Right ventricle myocardium inferior (tissue), 1 donor: ENCODE measurements at regions of chr4 and their contacts with region 1.

Region 1: DNA sequence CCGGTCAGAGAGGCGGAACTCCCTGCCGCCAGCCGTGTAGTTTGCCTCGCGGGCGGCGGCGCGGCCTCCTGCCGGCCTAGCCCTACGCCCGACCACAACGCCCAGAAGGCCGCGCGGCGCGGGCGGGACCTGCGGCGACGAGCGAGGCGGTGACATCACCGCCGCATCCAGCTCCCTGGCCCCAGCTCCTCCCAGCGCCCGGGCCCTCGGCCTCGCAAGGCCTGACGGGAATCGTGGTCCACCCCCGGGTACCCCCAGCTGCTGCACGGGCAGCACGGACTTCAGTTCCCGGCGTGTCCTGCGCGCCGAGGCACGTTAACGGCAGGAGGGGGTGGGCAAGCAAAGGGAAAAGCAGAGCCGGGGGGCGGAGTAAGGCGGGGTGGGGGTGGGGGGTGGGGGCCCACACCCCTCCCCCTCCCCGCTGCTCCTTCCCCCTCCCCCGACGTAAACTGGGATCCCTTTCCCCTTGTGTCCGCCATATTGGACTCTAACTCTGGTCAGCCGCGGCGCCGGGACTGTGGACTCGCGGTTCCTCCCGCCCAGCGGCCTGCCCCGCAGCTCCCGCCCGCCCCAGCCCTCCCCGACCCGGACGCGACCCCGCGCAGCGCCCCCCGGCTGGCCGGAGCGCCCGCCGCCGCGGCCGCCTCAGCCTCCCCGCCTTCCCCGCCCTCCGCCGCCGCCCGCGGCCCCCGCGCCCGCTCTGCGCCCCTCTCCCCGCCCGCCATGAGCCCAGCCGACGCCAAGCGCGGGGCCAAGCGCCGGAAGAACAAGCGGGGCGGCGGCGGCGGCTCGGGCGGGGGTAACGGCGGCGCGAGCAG is at the start of gene FAM193A:
- DNase-seq: peak; percentile 100
- ATAC-seq: peak; percentile 99
- total RNA-seq, gene FAM193A: 14.9 TPM

Region 2: DNA sequence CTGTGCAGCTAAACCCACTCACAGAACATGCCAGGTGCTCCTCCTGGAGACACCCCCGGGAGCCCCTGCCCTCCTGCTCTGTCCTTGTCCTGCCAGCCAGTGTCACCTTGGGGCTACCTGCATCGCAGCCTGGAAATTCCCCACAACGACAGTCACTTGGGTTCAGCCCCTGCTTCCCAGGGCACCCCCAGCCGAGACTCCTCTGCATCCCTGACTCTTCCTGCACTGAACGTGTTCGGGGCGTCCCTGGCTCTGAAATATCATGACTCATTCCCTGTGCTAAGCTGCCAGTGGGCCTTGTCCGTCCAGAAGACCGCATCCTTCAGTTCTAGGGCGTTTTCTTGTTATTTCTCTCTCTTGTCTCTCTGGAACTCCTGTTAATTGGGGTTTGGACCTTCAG is 111.8 kb before region 1 on chr4:
- intact Hi-C with region 1: loop called (anchors 5 kb)
- DNase-seq: no peak
- ATAC-seq: no peak

Region 3: DNA sequence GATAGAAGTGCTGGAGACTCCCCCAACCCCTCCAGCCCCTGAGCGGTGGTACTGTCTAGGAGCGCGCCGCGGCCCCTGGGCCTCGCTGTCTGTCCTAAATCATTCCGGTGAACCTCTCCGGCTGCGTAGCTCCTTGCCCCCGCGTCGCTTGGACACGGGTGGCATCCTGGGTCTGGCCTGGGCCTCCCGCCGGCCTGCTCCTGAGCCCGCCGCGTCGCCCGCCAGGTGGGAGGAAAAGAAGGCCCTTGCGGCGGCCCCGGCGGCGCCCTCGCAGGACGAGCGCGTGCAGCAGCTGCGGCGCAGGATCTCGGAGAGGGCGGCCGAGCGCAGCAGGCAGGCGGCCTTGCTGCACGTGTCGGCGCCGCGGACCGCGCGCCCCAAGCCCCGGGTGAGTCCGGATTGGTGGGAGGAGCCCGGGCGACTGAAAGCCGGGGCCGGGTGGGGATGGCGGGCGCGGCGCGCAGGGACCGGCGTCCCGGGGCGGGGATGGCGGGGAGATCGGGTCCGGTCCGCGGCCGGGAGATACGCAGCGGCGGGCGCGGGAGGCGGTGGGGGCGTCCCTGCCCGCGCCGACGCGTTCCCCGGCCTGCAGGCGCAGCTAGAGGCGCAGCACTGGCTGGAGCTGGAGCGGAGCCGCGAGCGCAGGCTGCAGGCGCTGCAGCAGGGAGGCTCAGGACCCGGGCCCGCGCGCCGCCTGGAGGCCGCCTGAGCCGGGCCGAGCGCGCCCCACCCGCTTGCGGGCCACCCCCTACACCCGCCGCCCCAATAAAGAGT is 74.0 kb before region 1 on chr4:
- intact Hi-C with region 1: loop called (anchors 2 kb)
- DNase-seq: peak; percentile 86
- ATAC-seq: peak; percentile 92

Region 4: DNA sequence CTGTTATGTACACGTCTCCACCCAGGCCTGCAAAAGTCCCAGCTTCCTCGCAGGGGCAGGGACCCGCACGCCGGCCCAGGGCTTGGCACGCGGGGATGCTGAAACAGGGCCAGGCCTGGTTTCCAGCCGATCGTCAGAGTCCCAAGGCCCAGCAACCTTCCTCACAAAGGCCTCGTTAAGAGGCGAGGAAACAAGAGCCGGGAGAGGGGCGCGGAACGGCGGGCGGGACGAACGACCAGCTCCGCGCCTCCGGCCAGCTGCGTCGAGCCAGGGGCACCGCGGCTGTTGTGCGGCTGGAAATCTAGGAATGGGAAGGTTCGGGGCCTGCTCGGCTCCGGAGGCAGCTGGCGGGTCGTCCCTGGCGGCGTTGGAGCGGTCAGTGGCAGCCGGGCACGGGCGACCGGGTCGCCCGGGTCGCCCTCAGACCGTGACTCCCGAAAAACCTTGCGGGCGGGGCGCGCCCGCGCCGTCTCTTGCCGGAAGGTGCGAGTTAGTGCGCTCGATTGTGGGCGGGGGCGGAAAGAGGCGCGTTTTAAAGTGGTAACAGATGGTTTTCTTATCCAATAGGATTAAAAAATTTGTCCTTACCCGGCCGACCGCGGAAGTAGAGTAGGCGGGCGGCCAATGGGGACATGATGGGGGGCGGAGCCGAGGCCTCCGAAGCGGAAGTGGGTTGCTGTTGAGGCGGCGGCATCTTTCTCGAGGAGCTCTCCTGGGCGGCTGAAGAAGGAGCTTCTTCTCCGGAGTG is 67.8 kb before region 1 on chr4 and contains the start of gene RNF4:
- intact Hi-C with region 1: loop called (anchors 2 kb)
- DNase-seq: peak; percentile 98
- ATAC-seq: peak; percentile 96
- total RNA-seq, gene RNF4: 27.2 TPM

Region 5: DNA sequence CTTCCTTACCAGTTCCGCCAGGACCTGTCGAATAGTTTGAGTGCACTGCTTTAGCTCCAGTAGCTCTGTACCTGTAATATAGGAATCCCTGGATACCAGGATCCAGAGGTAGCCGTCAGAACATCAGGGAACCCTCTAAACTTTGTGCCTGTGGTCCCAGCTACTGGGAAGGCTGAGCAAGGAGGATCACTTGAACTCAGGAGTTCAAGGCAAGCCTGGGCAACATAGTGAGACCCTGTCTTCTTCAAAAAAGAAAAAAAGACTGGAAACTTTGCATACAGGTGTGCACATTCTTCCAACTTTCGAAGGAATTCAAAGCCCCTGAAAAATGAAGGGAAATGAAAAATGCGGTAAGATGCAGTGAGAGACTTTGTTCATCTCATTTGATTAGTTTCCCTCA is 32.6 kb before region 1 on chr4:
- intact Hi-C with region 1: loop called (anchors 1 kb)
- DNase-seq: no peak
- ATAC-seq: no peak

Region 6: DNA sequence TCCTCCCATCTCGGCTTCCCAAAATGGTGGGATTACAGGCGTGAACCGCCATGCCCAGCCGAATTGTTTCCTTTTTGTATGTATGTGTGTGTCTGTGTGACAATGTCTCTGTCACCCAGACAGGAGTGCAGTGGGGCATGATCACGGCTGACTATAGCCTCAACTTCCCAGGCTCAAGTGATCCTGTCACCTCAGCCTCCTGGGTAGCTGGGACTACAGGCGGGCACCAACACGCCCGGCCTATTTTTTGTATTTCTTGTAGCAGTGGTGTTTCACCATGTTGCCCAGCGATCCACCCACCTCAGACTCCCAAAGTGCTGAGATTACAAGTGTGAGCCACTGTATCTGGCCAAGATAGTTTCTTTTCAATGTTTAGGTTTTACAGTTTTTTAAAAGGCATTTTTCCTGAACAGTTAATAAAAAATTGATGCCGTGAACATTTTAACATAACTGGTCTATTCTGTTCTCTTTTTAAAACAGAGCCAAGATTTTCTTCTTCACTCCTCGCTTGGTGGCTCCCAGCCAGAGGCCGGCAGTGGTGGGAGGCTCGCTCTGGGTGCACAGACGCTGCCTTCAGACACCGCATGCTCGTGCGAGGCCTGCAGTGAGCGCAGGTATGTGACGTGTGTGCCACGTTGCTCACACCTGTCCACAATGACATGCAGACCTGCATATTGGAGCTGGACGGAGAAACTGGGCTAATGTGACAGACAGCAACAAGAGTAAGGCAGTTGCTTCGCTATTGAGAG is 88.6 kb after region 1 on chr4:
- intact Hi-C with region 1: loop called (anchors 10 kb)
- DNase-seq: no peak
- ATAC-seq: no peak

Region 7: GRCh38 chr4:3074078-3074795 is 537.8 kb after region 1 on chr4 and contains the starts of genes HTT and HTT-AS:
- intact Hi-C with region 1: loop called (anchors 10 kb)
- DNase-seq: peak; percentile 98
- ATAC-seq: peak; percentile 93
- total RNA-seq, gene HTT: 24.2 TPM
- total RNA-seq, gene HTT-AS: not detected